Right ventricle myocardium inferior (tissue), 1 donor: ENCODE measurements at regions of chr15 and their contacts with region 1.

Region 1: GRCh38 chr15:57462381-57462780 is 86.1 kb downstream of the CGNL1 start:
- DNase-seq: no peak
- ATAC-seq: no peak

Region 2: GRCh38 chr15:57340682-57341259 is 121.6 kb before region 1 on chr15:
- intact Hi-C with region 1: loop called (anchors 5 kb)
- DNase-seq: no peak
- ATAC-seq: peak; percentile 49

Region 3: DNA sequence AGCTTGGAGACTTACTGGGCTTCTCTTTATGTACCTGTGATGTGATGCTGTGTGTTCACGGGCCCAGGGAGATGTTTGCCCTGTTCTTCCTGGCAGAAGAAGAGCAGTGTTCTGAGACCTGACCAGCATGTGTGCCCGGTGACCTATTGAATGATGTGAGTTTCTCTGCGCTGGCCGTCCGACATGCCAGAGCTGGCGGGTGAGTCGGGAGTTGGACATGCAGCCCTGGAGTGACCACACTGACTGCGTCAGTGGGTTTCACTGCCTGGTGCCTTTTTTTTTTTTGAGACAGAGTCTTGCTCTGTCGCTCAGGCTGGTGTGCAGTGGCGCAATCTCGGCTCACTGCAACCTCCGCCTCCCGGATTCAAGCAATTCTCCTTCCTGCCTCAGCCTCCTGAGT is 43.7 kb before region 1 on chr15:
- intact Hi-C with region 1: loop called (anchors 5 kb)
- DNase-seq: no peak
- ATAC-seq: no peak